ENCODE measurements at regions of chr15 and their contacts with region 1.

Region 1: GRCh38 chr15:73108676-73109075 is 56.4 kb downstream of the NEO1 start:
- DNase-seq: no peak
- ATAC-seq: no peak
- H3K4me3 ChIP-seq: no peak overlapping the region
- H3K27ac ChIP-seq: no peak overlapping the region
- H3K4me1 ChIP-seq: no peaks in the 10 kb centered on the region
- H3K27me3 ChIP-seq: no peaks in the 10 kb centered on the region
- CTCF ChIP-seq: no peak
- POLR2A ChIP-seq: no peak

Region 2: GRCh38 chr15:73212424-73212823 is 103.7 kb after region 1 on chr15:
- in situ Hi-C with region 1: loop called in 1 of 4 experiments (anchors 25 kb)
- intact Hi-C with region 1: no loop called
- DNase-seq: no peak
- ATAC-seq: no peak
- H3K4me3 ChIP-seq: no peak overlapping the region
- H3K27ac ChIP-seq: no peak overlapping the region
- H3K4me1 ChIP-seq: peaks cover 0 to 6% of the 10 kb centered on the region in 2 donors
- H3K27me3 ChIP-seq: no peaks in the 10 kb centered on the region
- CTCF ChIP-seq: no peak
- POLR2A ChIP-seq: no peak

Measured in gastrocnemius medialis (tissue), 4 donors.